ENCODE measurements at regions of chr4 and their contacts with region 1.

Region 1: DNA sequence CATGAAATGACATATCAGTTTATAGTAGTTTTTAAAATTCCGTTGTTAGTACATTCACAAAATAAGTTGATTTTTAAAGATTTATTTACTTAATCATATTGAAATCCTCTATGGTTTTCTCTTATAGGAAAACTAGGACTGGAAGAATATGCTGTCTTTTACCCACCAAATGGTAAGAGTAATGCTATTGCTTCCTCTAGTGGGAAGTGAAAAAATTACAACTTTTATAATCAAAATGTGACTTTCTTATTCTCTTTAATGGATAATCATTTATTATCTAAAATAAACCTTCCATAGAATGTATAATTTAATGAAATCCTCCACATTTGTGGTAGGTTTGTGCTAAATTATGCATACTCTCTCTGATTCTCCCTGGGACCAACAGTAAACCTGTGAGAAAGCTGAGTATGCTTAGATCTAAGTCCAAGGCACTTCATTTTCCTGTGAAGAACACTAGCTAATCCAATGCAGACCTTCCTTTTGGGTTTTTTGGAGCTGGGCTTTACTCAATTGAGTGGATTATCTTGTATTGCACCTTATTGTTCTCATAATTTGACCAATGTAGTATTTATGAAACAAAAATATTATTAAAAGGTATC is 136.2 kb downstream of the TBC1D19 start:
- DNase-seq: no peak
- H3K4me3 ChIP-seq: no peak overlapping the region
- H3K4me3 Mint-ChIP-seq: no peak overlapping the region
- H3K27ac Mint-ChIP-seq: no peak overlapping the region
- H3K4me1 ChIP-seq: no peaks in the 10 kb centered on the region
- H3K4me1 Mint-ChIP-seq: no peaks in the 10 kb centered on the region
- H3K27me3 ChIP-seq: no peaks in the 10 kb centered on the region
- H3K27me3 Mint-ChIP-seq: no peaks in the 10 kb centered on the region
- CTCF ChIP-seq: peak; percentile 33 to 59

Region 2: GRCh38 chr4:26330186-26330787 is 389.8 kb before region 1 on chr4:
- CTCF ChIA-PET with region 1: interaction called, 4 read pairs
- POLR2A ChIA-PET with region 1: no interaction called
- intact Hi-C with region 1: loop called (anchors 5 kb)
- DNase-seq: peak in 1 of 2 experiments; percentile 47
- H3K4me3 ChIP-seq: no peak overlapping the region
- H3K4me3 Mint-ChIP-seq: no peak overlapping the region
- H3K27ac Mint-ChIP-seq: no peak overlapping the region
- H3K4me1 ChIP-seq: no peaks in the 10 kb centered on the region
- H3K4me1 Mint-ChIP-seq: peaks cover 1% of the 10 kb centered on the region
- H3K27me3 ChIP-seq: no peaks in the 10 kb centered on the region
- H3K27me3 Mint-ChIP-seq: no peaks in the 10 kb centered on the region
- CTCF ChIP-seq: peak; percentile 60

Region 3: DNA sequence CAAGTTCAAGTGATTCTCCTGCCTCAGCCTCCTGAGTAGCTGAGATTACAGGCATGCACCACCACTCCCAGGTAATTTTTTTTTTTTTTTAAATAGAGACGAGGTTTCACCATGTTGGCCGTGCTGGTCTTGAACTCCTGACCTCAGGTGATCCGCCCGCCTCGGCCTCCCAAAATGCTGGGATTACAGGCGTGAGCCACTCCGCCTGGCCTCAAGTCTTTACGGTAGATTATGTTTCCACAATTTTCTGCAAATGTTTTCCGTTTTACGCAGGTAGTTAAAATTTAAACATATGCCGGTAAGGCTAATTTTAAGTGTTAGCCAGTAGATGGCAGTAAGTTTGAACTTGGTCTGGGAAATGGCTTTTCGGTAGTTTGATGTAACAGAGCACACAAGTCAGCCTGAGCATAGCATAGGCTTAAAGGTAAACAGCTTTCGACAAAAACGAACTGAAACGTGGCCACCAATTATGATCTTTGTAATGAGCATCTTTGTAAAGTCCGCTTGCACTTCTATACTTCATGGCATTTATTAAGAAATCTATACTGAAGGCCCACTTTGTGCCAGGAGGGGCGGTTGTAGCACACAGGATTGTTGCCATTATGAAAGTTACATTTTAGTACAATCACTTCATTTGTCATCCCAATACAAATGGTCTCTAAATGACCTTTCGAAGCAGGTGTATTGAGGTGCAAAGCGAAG is 260.8 kb before region 1 on chr4:
- CTCF ChIA-PET with region 1: interaction called, 3 read pairs
- POLR2A ChIA-PET with region 1: no interaction called
- intact Hi-C with region 1: loop called (anchors 1 kb)
- DNase-seq: peak in 1 of 2 experiments; percentile 36
- H3K4me3 ChIP-seq: no peak overlapping the region
- H3K4me3 Mint-ChIP-seq: peak overlapping the region; percentile 46
- H3K27ac Mint-ChIP-seq: no peak overlapping the region
- H3K4me1 ChIP-seq: no peaks in the 10 kb centered on the region
- H3K4me1 Mint-ChIP-seq: no peaks in the 10 kb centered on the region
- H3K27me3 ChIP-seq: no peaks in the 10 kb centered on the region
- H3K27me3 Mint-ChIP-seq: no peaks in the 10 kb centered on the region
- CTCF ChIP-seq: peak; percentile 42 to 51

Region 4: DNA sequence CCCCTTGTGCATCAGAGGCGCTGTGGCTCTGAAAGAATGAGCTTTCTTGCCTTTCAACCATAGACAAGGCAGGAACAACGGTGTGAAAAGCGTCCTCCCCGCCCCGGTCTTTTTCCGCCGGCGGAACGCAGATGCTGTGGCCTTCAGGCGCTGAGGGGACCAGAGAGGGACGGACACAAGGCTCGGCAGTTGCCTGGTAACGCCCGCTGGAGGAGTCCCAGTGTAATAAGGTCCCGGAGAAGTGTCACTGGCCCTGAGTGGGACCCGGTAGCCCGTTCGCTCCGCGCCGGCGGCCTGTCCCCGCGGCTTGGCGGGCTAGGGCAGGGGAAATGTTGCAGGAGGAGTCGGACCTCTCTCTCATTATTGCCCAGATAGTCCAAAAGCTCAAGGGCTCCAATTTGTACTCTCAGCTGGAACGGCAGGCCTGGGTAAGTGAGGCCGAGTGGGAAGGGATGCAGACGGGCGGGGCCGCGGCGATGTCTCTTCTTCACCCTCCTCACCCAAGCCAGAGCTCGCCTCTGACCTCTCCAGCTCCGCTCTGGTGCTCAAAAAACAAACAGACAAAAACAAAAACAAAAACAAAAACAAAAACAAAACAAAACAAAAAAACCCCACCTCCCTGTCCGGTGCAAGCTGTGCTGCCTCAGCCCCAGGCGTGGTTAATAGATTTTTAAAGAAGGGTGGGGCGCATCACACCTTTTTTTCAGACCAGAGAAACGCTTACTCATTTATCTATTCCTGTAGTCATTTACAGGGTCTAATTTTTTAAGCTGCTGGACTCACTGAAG is 136.0 kb before region 1 on chr4 and contains the start of gene TBC1D19:
- CTCF ChIA-PET with region 1: no interaction called
- POLR2A ChIA-PET with region 1: no interaction called
- intact Hi-C with region 1: loop called (anchors 10 kb)
- DNase-seq: peak; percentile 89 to 90
- H3K4me3 ChIP-seq: peak within 1 kb of the TSS; percentile 61
- H3K4me3 Mint-ChIP-seq: peak within 1 kb of the TSS; percentile 75
- H3K27ac Mint-ChIP-seq: peak within 1 kb of the TSS; percentile 73
- H3K4me1 ChIP-seq: no peaks in the 10 kb centered on the region
- H3K4me1 Mint-ChIP-seq: peaks cover 7% of the 10 kb centered on the region
- H3K27me3 ChIP-seq: no peaks in the 10 kb centered on the region
- H3K27me3 Mint-ChIP-seq: no peaks in the 10 kb centered on the region
- CTCF ChIP-seq: no peak
- total RNA-seq, gene TBC1D19: 13.8 and 19.1 TPM in 2 replicates

Region 5: DNA sequence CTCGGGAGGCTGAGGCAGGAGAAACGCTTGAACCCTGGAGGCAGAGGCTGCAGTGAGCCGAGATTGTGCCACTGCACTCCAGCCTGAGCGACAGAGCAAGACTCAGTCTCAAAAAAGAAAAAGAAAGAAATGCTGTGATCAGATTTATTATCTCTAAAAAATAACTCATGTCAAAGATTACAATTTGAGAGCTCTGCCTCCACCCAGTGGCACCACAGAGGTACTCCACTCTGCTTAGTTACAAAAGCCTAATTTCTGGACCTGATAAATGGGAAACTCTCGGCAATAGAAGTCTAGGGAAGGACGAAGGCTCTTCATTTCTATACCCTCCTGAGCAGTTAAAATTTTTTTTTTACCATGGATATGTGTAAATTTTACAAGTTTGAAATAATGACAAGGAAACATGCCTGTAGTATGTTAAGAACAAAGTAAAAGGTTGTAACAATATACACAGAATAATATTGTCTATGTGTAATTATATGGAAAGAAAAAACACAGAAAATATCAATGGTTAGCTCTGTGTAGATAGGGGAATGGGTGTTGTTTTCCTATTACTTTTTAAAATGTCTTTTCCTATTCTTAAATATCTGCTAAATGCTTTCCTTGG is 290.4 kb after region 1 on chr4:
- CTCF ChIA-PET with region 1: no interaction called
- POLR2A ChIA-PET with region 1: no interaction called
- intact Hi-C with region 1: loop called (anchors 1 kb)
- DNase-seq: peak; percentile 43 to 55
- H3K4me3 ChIP-seq: no peak overlapping the region
- H3K4me3 Mint-ChIP-seq: no peak overlapping the region
- H3K27ac Mint-ChIP-seq: no peak overlapping the region
- H3K4me1 ChIP-seq: no peaks in the 10 kb centered on the region
- H3K4me1 Mint-ChIP-seq: no peaks in the 10 kb centered on the region
- H3K27me3 ChIP-seq: no peaks in the 10 kb centered on the region
- H3K27me3 Mint-ChIP-seq: no peaks in the 10 kb centered on the region
- CTCF ChIP-seq: peak; percentile 74 to 80

Region 6: DNA sequence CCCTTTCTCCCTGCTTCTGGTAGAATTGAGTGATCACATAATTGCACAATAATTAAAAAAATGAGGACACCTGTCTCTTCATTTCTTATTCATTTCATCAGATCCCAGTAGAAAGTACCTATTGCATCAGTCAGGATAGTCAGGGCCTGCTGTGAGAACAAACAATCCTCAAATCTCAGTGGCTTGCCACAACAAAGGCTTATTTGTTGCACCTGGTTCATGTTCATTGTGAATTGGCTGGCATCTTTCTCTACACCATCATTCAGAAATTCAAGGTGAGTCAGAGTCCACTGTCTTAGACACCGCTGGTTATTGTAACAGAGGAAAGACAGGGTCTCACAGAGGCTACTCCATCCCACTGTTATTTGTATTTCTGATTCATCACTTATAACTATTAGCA is 550.4 kb after region 1 on chr4:
- CTCF ChIA-PET with region 1: no interaction called
- POLR2A ChIA-PET with region 1: no interaction called
- intact Hi-C with region 1: no loop called
- DNase-seq: no peak
- H3K4me3 ChIP-seq: no peak overlapping the region
- H3K4me3 Mint-ChIP-seq: no peak overlapping the region
- H3K27ac Mint-ChIP-seq: no peak overlapping the region
- H3K4me1 ChIP-seq: no peaks in the 10 kb centered on the region
- H3K4me1 Mint-ChIP-seq: no peaks in the 10 kb centered on the region
- H3K27me3 ChIP-seq: no peaks in the 10 kb centered on the region
- H3K27me3 Mint-ChIP-seq: peaks cover 14% of the 10 kb centered on the region
- CTCF ChIP-seq: no peak